Mammary epithelial cell (primary cell): ENCODE measurements at regions of chrX and their contacts with region 1.

Region 1: GRCh38 chrX:136028251-136028984 is 43.2 kb downstream of the SLC9A6 start:
- DNase-seq: peak; percentile 53
- H3K4me3 ChIP-seq: no peak overlapping the region
- H3K27ac ChIP-seq: no peak overlapping the region
- H3K4me1 ChIP-seq: no peaks in the 10 kb centered on the region
- H3K27me3 ChIP-seq: no peaks in the 10 kb centered on the region
- CTCF ChIP-seq: peak; percentile 59 to 67

Region 2: GRCh38 chrX:136162831-136163570 is 134.6 kb after region 1 on chrX:
- CTCF ChIA-PET with region 1: interaction called, 24 read pairs
- dilution Hi-C with region 1: no loop called
- in situ Hi-C with region 1: loop called in 1 of 2 experiments (anchors 10 kb)
- intact Hi-C with region 1: loop called (anchors 1 kb)
- DNase-seq: peak; percentile 45
- H3K4me3 ChIP-seq: no peak overlapping the region
- H3K27ac ChIP-seq: no peak overlapping the region
- H3K4me1 ChIP-seq: no peaks in the 10 kb centered on the region
- H3K27me3 ChIP-seq: peaks cover 3% of the 10 kb centered on the region
- CTCF ChIP-seq: peak; percentile 66 to 86

Region 3: DNA sequence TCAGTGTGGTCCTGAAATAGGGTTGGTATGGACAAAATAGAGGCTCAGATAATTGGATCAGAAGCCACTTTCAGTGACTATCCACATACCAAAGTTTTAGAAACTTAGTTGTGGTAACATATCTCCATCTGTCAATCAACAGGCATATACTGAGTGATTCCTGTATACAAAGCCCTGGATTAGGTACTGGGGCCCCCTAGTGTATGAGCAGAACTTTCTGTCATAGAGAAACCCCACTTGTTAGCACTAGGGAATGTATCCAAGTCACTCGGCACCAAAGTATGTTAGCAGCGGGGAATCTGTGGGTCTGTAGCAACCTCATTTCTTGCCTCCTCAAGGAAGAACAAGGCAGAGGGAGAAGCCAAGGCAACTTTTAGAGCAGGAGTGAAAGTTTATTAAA is 172.0 kb after region 1 on chrX:
- CTCF ChIA-PET with region 1: no interaction called
- dilution Hi-C with region 1: no loop called
- in situ Hi-C with region 1: no loop called
- intact Hi-C with region 1: loop called (anchors 1 kb)
- DNase-seq: peak; percentile 11
- H3K4me3 ChIP-seq: no peak overlapping the region
- H3K27ac ChIP-seq: no peak overlapping the region
- H3K4me1 ChIP-seq: no peaks in the 10 kb centered on the region
- H3K27me3 ChIP-seq: no peaks in the 10 kb centered on the region
- CTCF ChIP-seq: peak in 1 of 2 donors; percentile 40

Region 4: DNA sequence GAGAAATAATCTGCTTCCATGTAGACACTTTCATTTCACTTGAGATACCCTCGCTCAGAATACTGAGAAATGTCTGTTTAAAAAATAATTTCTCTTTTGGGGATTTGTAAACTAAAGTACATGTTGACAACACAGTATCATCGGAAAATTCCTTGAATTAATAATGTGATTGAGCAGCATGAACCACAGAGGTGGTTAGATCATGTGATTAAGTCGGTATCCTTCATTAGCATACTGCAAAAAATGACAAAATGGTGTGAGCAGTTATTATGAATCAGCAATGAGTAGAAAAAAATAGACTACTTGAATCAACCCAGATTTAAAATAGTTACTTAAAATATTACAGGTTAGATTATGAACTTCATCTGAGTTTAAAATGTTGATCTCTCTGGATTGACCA is 208.7 kb after region 1 on chrX:
- CTCF ChIA-PET with region 1: no interaction called
- dilution Hi-C with region 1: no loop called
- in situ Hi-C with region 1: no loop called
- intact Hi-C with region 1: no loop called
- DNase-seq: no peak
- H3K4me3 ChIP-seq: no peak overlapping the region
- H3K27ac ChIP-seq: no peak overlapping the region
- H3K4me1 ChIP-seq: no peaks in the 10 kb centered on the region
- H3K27me3 ChIP-seq: peaks cover 2% of the 10 kb centered on the region
- CTCF ChIP-seq: no peak

Region 5: GRCh38 chrX:136268051-136269048 is 239.9 kb after region 1 on chrX:
- CTCF ChIA-PET with region 1: no interaction called
- dilution Hi-C with region 1: no loop called
- in situ Hi-C with region 1: no loop called
- intact Hi-C with region 1: loop called (anchors 2 kb)
- DNase-seq: no peak
- H3K4me3 ChIP-seq: no peak overlapping the region
- H3K27ac ChIP-seq: no peak overlapping the region
- H3K4me1 ChIP-seq: peaks cover 7% of the 10 kb centered on the region
- H3K27me3 ChIP-seq: no peaks in the 10 kb centered on the region
- CTCF ChIP-seq: peak; percentile 71 to 84

Region 6: DNA sequence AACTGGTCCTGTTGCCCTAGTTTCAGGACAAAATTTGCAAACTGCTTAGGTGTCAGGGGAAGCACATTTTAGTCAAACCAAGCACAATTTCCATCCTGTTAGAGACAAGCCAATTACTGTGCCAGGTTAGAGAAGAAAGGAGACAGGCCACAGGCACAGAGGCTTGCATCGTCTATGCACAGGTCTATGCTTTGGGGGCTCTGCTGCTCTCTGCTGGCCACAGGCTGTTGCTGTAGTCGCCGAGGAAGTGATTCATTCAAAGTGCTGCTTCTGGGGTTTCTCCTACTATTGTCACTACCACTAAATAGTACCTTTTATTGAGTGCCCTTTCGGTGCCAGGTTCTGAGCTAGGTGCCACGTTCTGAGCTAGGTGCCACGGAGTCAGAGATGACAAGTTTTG is 549.1 kb after region 1 on chrX:
- CTCF ChIA-PET with region 1: interaction called, 6 read pairs
- dilution Hi-C with region 1: no loop called
- in situ Hi-C with region 1: no loop called
- intact Hi-C with region 1: loop called (anchors 5 kb)
- DNase-seq: peak; percentile 37
- H3K4me3 ChIP-seq: no peak overlapping the region
- H3K27ac ChIP-seq: no peak overlapping the region
- H3K4me1 ChIP-seq: no peaks in the 10 kb centered on the region
- H3K27me3 ChIP-seq: no peaks in the 10 kb centered on the region
- CTCF ChIP-seq: peak; percentile 68 to 79